ENCODE measurements at regions of chr4 and their contacts with region 1.

Region 1: DNA sequence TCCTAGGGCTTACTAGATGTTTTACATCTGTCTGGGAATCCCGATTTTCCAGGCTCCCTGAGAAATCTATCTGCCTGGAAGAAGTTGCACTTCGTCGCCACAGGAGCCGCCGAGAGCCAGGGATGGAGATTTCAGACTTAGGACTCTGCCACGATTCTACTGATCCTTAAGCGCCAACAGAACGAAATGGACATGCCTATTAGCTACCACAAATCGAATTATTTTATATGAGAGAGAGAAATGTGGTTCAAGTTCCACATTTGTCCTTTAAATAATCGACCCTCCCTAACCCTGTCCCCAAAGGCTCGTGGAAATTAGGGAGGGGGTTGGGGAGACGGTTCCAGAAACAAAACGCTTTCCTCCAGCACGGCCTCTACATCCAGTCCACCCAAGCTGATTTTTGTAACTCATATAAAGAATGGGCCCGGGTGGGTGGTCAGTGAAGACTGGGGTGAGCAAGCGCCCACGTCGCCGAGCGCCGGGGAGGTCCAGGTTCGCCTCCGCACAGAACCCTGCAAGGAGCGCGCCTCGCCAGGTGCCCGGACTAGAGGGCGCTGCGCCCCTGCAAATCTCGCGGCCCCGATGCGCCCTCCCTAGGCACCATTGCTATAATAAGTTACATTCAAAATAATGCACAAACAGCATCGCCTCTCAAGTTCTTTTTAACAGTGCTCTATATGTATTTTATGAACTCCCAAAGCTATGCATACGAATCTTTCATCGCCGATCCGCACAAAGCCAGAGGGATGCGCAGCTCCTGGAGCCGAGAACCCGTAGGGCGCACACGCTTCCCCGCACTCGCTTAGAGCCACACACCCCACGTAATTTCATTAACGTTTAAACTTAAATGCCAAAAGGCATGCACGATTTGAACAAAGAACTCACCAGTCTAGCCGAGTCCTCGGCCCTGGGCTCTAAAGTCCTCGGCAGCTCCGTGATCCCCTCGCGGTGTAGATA is 2.1 kb upstream of the FAT1 start:
- DNase-seq: peak; percentile 68
- ATAC-seq: peak; percentile 74
- H3K4me3 ChIP-seq: peak overlapping the region; percentile 69 to 99 (median 95)
- H3K27ac ChIP-seq: peak overlapping the region; percentile 86
- H3K4me1 ChIP-seq: peaks cover 50% of the 10 kb centered on the region
- H3K27me3 ChIP-seq: no peaks in the 10 kb centered on the region; a peak in 1 of 5 replicates
- CTCF ChIP-seq: peak; percentile 95
- EP300 ChIP-seq: no peak
- POLR2A ChIP-seq: no peak
- RAD21 ChIP-seq: peak; percentile 91

Region 2: GRCh38 chr4:186445040-186445439 is 280.7 kb before region 1 on chr4:
- CTCF ChIA-PET with region 1: no interaction called
- POLR2A ChIA-PET with region 1: no interaction called
- in situ Hi-C with region 1: no loop called
- intact Hi-C with region 1: no loop called
- DNase-seq: no peak
- ATAC-seq: no peak
- H3K4me3 ChIP-seq: no peak overlapping the region
- H3K27ac ChIP-seq: no peak overlapping the region
- H3K4me1 ChIP-seq: no peaks in the 10 kb centered on the region
- H3K27me3 ChIP-seq: peaks cover 0 to 5% of the 10 kb centered on the region in 2 experiments; a peak in 1 of 5 replicates
- CTCF ChIP-seq: no peak
- EP300 ChIP-seq: no peak
- POLR2A ChIP-seq: no peak
- RAD21 ChIP-seq: no peak

Region 3: DNA sequence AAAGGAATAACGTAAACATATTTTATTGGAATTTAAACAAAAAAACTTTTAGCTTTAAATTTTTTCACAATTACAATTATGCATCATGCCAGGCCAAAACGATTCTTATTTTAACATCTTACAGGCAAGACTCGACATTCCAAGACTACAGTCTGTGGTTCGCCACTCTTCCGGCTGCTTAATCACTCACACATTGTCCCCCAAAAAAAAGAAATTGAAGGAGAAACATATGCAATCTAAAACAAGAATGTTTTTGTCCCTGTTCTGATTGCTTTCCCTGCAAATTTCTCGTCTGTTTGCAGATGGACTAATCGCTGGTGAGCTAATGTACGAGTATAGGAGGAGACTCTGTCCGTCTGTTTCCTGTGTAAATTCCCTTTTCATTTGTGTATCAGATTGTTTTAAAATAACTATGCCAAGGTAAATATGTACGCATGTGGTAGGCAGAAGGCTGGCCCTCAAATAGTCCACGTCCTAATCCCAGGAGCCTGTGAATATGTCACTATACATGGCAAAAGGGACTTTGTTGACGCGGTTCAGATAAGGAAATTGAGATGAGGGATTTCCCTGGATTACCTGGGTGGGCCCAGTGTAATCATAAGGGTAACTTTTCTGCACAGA is 132.7 kb before region 1 on chr4:
- CTCF ChIA-PET with region 1: no interaction called
- POLR2A ChIA-PET with region 1: no interaction called
- in situ Hi-C with region 1: no loop called
- intact Hi-C with region 1: no loop called
- DNase-seq: no peak
- ATAC-seq: no peak
- H3K4me3 ChIP-seq: no peak overlapping the region
- H3K27ac ChIP-seq: no peak overlapping the region
- H3K4me1 ChIP-seq: no peaks in the 10 kb centered on the region
- H3K27me3 ChIP-seq: no peaks in the 10 kb centered on the region
- CTCF ChIP-seq: no peak
- EP300 ChIP-seq: no peak
- POLR2A ChIP-seq: no peak
- RAD21 ChIP-seq: no peak

Region 4: GRCh38 chr4:186604124-186604807 is 121.5 kb before region 1 on chr4:
- CTCF ChIA-PET with region 1: no interaction called
- POLR2A ChIA-PET with region 1: no interaction called
- in situ Hi-C with region 1: no loop called
- intact Hi-C with region 1: loop called (anchors 5 kb)
- DNase-seq: peak; percentile 59
- ATAC-seq: no peak
- H3K4me3 ChIP-seq: no peak overlapping the region
- H3K27ac ChIP-seq: no peak overlapping the region
- H3K4me1 ChIP-seq: no peaks in the 10 kb centered on the region
- H3K27me3 ChIP-seq: no peaks in the 10 kb centered on the region
- CTCF ChIP-seq: no peak
- EP300 ChIP-seq: no peak
- POLR2A ChIP-seq: no peak
- RAD21 ChIP-seq: no peak

Region 5: DNA sequence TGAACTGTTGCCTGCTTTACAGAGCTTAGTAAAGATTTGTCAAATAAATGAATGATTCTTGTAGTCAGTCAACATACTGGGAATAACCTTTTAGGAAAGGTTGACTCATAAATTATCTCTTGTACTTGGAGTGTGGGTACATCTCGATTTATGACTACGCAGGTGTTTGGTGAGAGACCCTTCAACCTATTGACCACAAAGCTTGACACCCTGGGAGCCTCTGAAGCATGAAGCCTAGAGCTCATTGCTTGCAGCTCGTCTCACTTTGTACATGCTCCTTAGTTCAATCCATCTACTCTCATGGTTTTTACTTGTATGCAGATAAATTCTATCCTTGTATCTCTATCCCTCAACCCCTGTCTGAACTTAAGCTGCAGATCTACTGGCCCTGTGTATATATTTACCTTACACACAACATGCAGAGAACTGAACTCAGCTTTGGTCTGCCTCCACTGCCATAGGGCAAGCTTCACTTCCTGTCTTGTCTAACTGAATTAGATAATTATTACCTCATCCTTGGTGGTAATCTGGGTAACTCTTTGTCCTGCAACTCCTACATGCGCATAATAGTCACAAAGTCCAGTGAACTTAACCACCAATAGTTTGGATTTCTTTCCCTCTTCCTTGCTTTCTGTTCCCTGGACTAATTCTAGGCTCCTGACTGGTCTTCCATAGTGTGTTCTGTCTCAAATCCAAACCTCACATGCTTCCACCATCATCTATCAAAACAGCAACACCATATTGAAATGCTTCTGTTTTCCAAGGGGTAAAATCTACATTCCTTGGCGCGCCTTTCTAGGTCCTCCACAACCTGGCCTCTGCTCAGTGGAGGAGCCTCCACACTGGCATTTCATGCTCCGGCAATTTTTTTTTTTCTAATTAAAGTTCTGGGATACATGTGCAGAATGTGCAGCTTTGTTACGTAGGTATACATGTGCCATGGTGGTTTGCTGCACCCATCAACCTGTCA is 30.1 kb after region 1 on chr4:
- CTCF ChIA-PET with region 1: no interaction called
- POLR2A ChIA-PET with region 1: interaction called, 9 read pairs
- in situ Hi-C with region 1: no loop called
- intact Hi-C with region 1: loop called (anchors 1 kb)
- DNase-seq: peak; percentile 97
- ATAC-seq: peak; percentile 99
- H3K4me3 ChIP-seq: peak overlapping the region in 1 of 3 experiments; percentile 39; a peak in 1 of 6 replicates
- H3K27ac ChIP-seq: peak overlapping the region; percentile 89
- H3K4me1 ChIP-seq: peaks cover 58% of the 10 kb centered on the region
- H3K27me3 ChIP-seq: no peaks in the 10 kb centered on the region
- CTCF ChIP-seq: no peak
- EP300 ChIP-seq: peak in 1 of 2 experiments; percentile 88; a peak in 2 of 4 replicates
- POLR2A ChIP-seq: peak in 1 of 2 experiments; percentile 37; a peak in 1 of 4 replicates
- RAD21 ChIP-seq: no peak

Region 6: GRCh38 chr4:186829740-186830449 is 104.1 kb after region 1 on chr4:
- CTCF ChIA-PET with region 1: no interaction called
- POLR2A ChIA-PET with region 1: no interaction called
- in situ Hi-C with region 1: no loop called
- intact Hi-C with region 1: loop called (anchors 5 kb)
- DNase-seq: peak; percentile 52
- ATAC-seq: peak; percentile 55
- H3K4me3 ChIP-seq: peak overlapping the region in 1 of 3 experiments; percentile 26; a peak in 1 of 6 replicates
- H3K27ac ChIP-seq: no peak overlapping the region
- H3K4me1 ChIP-seq: peaks cover 61% of the 10 kb centered on the region
- H3K27me3 ChIP-seq: peaks cover 0 to 5% of the 10 kb centered on the region in 2 experiments; a peak in 2 of 5 replicates
- CTCF ChIP-seq: no peak
- EP300 ChIP-seq: peak in 1 of 2 experiments; percentile 51; a peak in 1 of 4 replicates
- POLR2A ChIP-seq: no peak
- RAD21 ChIP-seq: no peak

Region 7: DNA sequence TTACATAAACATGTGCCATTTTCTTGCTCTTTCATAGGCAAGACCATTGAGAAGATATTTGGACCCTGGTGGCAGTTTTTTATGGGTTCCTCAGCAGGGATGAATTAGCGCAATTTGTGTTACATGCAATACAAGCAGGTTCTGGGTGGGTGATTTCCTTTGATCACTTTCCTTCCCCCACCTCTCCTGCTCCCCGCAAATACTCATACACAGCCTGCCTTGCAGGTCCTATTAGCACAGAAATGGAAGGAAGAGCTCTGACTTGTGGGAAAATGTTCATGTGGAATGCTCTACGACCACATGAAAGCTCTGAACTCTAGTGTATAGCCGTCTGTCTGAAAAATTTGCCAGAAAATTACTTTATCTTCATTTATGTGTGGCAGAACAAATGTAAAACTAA is 359.0 kb after region 1 on chr4:
- CTCF ChIA-PET with region 1: no interaction called
- POLR2A ChIA-PET with region 1: no interaction called
- in situ Hi-C with region 1: no loop called
- intact Hi-C with region 1: loop called (anchors 10 kb)
- DNase-seq: no peak
- ATAC-seq: no peak
- H3K4me3 ChIP-seq: no peak overlapping the region
- H3K27ac ChIP-seq: no peak overlapping the region
- H3K4me1 ChIP-seq: no peaks in the 10 kb centered on the region
- H3K27me3 ChIP-seq: peaks cover 0 to 26% of the 10 kb centered on the region in 2 experiments; a peak in 2 of 5 replicates
- CTCF ChIP-seq: no peak
- EP300 ChIP-seq: no peak
- POLR2A ChIP-seq: no peak
- RAD21 ChIP-seq: no peak

Region 8: DNA sequence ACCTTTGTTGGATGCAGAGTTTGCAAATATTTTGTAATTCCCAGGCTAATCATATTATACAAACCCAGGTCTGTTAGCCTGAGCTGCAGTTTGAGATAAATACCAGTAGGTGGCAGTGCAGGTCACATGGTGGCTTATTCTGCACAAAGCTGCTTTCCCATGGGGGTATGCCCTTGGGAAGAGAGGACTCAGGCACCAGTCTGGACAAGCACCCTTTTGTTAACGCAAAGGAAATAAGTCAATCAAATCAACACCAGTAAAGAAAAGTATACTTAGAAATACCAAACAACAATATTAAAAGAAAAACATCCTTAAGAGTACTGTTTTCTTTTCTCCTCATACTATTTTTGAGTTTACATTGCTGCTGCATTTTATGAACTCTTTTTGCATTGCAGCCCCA is 880.8 kb after region 1 on chr4:
- CTCF ChIA-PET with region 1: no interaction called
- POLR2A ChIA-PET with region 1: no interaction called
- in situ Hi-C with region 1: no loop called
- intact Hi-C with region 1: loop called (anchors 10 kb)
- DNase-seq: peak; percentile 50
- ATAC-seq: peak; percentile 84
- H3K4me3 ChIP-seq: no peak overlapping the region
- H3K27ac ChIP-seq: no peak overlapping the region
- H3K4me1 ChIP-seq: no peaks in the 10 kb centered on the region
- H3K27me3 ChIP-seq: peaks cover 0 to 3% of the 10 kb centered on the region in 2 experiments; a peak in 2 of 5 replicates
- CTCF ChIP-seq: peak; percentile 84
- EP300 ChIP-seq: no peak
- POLR2A ChIP-seq: no peak
- RAD21 ChIP-seq: peak; percentile 48; the same call in 1 of the 2 replicates

Region 9: DNA sequence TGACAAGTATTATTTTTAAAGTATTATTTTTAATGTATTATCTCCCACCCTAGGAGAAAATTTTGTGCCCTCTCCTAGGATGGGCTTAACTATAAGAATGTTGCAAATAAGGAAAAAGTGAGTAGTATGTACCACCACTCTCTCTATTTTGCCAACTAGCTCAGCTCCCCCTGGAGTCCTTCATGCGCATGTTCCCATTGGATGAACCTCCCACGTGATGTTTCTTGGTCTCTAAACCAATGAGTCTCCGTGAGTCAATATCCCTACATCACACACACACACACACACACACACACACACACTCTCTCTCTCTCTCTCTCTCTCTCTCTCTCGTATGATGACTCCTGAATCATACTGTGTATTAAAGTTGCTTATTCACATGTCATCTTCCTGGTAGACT is 1140.2 kb after region 1 on chr4:
- CTCF ChIA-PET with region 1: no interaction called
- POLR2A ChIA-PET with region 1: no interaction called
- in situ Hi-C with region 1: no loop called
- intact Hi-C with region 1: no loop called
- DNase-seq: no peak
- ATAC-seq: no peak
- H3K4me3 ChIP-seq: no peak overlapping the region
- H3K27ac ChIP-seq: no peak overlapping the region
- H3K4me1 ChIP-seq: no peaks in the 10 kb centered on the region
- H3K27me3 ChIP-seq: no peaks in the 10 kb centered on the region
- CTCF ChIP-seq: no peak
- EP300 ChIP-seq: no peak
- POLR2A ChIP-seq: no peak
- RAD21 ChIP-seq: no peak

Measured in HepG2 (cell line).